GM12878 (cell line): ENCODE measurements at regions of chrX and their contacts with region 1.

Region 1: GRCh38 chrX:46796574-46797191 is 37.8 kb upstream of the SLC9A7 start:
- DNase-seq: no peak
- ATAC-seq: peak; percentile 80
- H3K4me3 ChIP-seq: no peak overlapping the region
- H3K27ac ChIP-seq: no peak overlapping the region
- H3K4me1 ChIP-seq: peaks cover 20% of the 10 kb centered on the region
- H3K27me3 ChIP-seq: no peaks in the 10 kb centered on the region
- CTCF ChIP-seq: peak; percentile 88 to 93 (median 90)
- EP300 ChIP-seq: no peak
- POLR2A ChIP-seq: no peak
- RAD21 ChIP-seq: peak; percentile 93

Region 2: GRCh38 chrX:46381630-46382029 is 415.1 kb before region 1 on chrX:
- CTCF ChIA-PET with region 1: interaction called, 23 read pairs
- POLR2A ChIA-PET with region 1: no interaction called
- RAD21 ChIA-PET with region 1: interaction called, 7 read pairs
- SMC1A ChIA-PET with region 1: interaction called, 11 read pairs
- in situ Hi-C with region 1: loop called (anchors 10 kb)
- intact Hi-C with region 1: loop called (anchors 1 kb)
- DNase-seq: peak; percentile 4
- ATAC-seq: peak; percentile 85
- H3K4me3 ChIP-seq: no peak overlapping the region
- H3K27ac ChIP-seq: no peak overlapping the region
- H3K4me1 ChIP-seq: no peaks in the 10 kb centered on the region
- H3K27me3 ChIP-seq: no peaks in the 10 kb centered on the region
- CTCF ChIP-seq: peak; percentile 60 to 71 (median 65)
- EP300 ChIP-seq: no peak
- POLR2A ChIP-seq: no peak
- RAD21 ChIP-seq: peak; percentile 64

Region 3: DNA sequence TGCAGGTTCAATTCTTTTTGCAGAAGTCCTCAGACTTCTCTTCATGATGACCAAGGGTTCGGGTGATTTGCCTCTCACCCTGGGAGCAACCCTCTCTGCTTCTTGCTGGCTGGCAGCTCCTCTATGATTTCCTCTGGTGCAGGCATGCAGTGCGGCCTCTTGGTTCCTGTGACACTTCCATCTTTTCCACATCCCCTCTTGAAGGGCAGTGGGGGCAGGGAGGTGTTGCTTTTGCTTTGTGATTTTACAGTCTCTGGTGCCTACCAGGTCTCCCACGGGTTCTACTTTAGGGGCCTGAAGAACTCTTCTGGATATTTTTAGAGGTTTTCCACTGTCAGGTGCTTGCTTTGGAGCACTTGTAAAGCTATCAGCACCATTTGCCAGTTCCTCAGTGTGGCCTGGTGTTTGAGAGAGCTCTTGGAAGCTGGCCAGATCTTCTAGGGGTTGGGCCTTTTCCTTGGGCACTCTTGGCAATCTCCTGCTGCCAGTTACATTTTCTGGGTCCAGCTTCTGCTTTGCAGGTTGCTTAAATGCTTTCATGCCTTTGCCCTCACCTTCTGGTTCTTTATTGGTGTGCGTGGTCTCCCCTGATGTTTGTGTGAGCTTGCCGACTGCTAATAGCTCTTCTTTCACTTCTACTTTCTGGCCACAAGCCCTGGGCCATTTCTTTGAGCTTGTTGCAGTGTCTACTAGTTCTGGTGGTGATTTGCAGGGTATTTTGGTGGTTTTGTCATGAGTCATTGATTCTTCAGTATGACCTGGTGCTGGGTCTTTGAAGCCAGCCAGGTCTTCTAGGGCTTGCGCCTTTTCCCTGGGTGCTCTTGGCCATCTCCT is 234.6 kb before region 1 on chrX:
- CTCF ChIA-PET with region 1: interaction called, 42 read pairs
- POLR2A ChIA-PET with region 1: no interaction called
- RAD21 ChIA-PET with region 1: interaction called, 14 read pairs
- SMC1A ChIA-PET with region 1: interaction called, 6 read pairs
- in situ Hi-C with region 1: loop called (anchors 10 kb)
- intact Hi-C with region 1: no loop called
- DNase-seq: peak; percentile 95
- ATAC-seq: peak; percentile 99
- H3K4me3 ChIP-seq: peak overlapping the region; percentile 4; the same call in 1 of the 2 replicates
- H3K27ac ChIP-seq: peak overlapping the region; percentile 62
- H3K4me1 ChIP-seq: peaks cover 20% of the 10 kb centered on the region
- H3K27me3 ChIP-seq: no peaks in the 10 kb centered on the region
- CTCF ChIP-seq: no peak
- EP300 ChIP-seq: peak; percentile 70 to 94
- POLR2A ChIP-seq: no peak
- RAD21 ChIP-seq: 0 out of 2 replicates have a peak, but pooled peaks have one; percentile 6

Region 4: DNA sequence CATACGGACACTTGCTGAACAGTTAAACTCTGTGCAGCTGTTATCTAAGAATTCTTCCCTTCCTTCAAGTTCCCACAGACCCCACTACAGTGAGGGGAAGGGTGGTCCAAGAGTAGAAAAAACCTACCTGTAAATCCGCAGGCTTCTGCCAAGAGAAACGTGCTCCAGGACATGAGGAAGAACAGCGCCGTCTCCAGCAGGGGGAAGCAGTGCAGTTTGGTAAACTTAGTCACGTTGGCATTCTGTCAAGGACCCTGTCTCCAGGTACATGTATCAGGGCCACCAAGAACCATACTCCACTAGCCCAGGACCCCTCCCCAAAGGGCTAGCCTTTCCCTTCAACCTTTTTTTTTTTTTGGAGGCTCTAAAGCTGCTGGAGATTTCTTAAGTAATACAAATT is 143.2 kb before region 1 on chrX:
- CTCF ChIA-PET with region 1: interaction called, 45 read pairs
- POLR2A ChIA-PET with region 1: interaction called, 4 read pairs
- RAD21 ChIA-PET with region 1: interaction called, 22 read pairs
- SMC1A ChIA-PET with region 1: interaction called, 36 read pairs
- in situ Hi-C with region 1: loop called (anchors 5 kb)
- intact Hi-C with region 1: loop called (anchors 1 kb)
- DNase-seq: no peak
- ATAC-seq: peak; percentile 67
- H3K4me3 ChIP-seq: no peak overlapping the region
- H3K27ac ChIP-seq: peak overlapping the region; percentile 62
- H3K4me1 ChIP-seq: peaks cover 16% of the 10 kb centered on the region
- H3K27me3 ChIP-seq: no peaks in the 10 kb centered on the region
- CTCF ChIP-seq: peak; percentile 46 to 52 (median 48); a peak in 5 of 6 replicates
- EP300 ChIP-seq: no peak
- POLR2A ChIP-seq: no peak
- RAD21 ChIP-seq: peak; percentile 55

Region 5: DNA sequence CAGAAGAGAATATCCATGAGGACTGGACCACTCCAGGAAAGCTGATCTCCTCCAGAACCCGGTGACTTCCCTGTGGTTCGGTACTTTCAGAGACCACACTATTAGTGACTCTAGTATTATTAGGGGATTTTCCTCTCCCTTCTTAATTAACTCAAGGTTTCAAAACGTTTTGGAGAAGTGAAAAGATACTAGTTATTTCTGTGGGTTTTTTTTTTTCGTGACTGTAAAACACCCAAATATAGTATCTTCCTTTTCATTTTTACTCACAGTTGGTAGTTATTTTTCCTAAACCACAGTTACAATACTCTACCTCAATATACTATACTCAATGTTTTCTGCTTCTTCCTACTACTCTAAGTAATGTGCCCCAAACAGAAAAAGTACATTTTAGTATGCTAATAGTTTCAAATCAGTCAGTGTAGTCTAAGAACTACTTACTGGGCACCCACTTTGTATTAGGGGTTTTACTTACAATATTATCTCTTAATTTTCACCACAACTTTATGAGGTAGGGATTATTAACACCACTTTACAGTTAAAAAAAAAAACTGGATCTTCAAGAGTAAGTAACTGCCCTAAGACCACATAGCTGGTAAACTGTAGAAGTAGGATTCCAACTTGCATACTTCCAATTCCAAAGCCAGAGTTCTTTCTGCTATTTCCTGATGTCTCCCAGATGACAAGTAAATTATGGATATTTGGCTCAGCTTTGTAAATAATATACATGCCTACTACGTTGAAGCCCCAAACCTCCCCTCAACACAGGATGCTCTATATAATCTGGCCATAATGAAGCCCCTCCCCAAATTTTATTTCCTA is 82.8 kb before region 1 on chrX:
- CTCF ChIA-PET with region 1: interaction called, 3 read pairs
- POLR2A ChIA-PET with region 1: no interaction called
- RAD21 ChIA-PET with region 1: interaction called, 8 read pairs
- SMC1A ChIA-PET with region 1: interaction called, 4 read pairs
- in situ Hi-C with region 1: loop called (anchors 5 kb)
- intact Hi-C with region 1: loop called (anchors 1 kb)
- DNase-seq: peak; percentile 82
- ATAC-seq: peak; percentile 70
- H3K4me3 ChIP-seq: peak overlapping the region; percentile 33
- H3K27ac ChIP-seq: peak overlapping the region; percentile 89
- H3K4me1 ChIP-seq: peaks cover 60% of the 10 kb centered on the region
- H3K27me3 ChIP-seq: no peaks in the 10 kb centered on the region
- CTCF ChIP-seq: no peak
- EP300 ChIP-seq: peak; percentile 98 to 99
- POLR2A ChIP-seq: no peak
- RAD21 ChIP-seq: no peak

Region 6: GRCh38 chrX:47030339-47030738 is 233.7 kb after region 1 on chrX:
- CTCF ChIA-PET with region 1: interaction called, 15 read pairs
- POLR2A ChIA-PET with region 1: no interaction called
- RAD21 ChIA-PET with region 1: interaction called, 3 read pairs
- SMC1A ChIA-PET with region 1: interaction called, 4 read pairs
- in situ Hi-C with region 1: no loop called
- intact Hi-C with region 1: no loop called
- DNase-seq: peak; percentile 2
- ATAC-seq: peak; percentile 64
- H3K4me3 ChIP-seq: no peak overlapping the region
- H3K27ac ChIP-seq: no peak overlapping the region
- H3K4me1 ChIP-seq: no peaks in the 10 kb centered on the region
- H3K27me3 ChIP-seq: no peaks in the 10 kb centered on the region; a peak in 1 of 4 replicates
- CTCF ChIP-seq: peak; percentile 54 to 66 (median 54)
- EP300 ChIP-seq: no peak
- POLR2A ChIP-seq: no peak
- RAD21 ChIP-seq: peak; percentile 75